ENCODE measurements at regions of chr15 and their contacts with region 1.

Region 1: GRCh38 chr15:57950381-57950946 is 115.0 kb downstream of the ALDH1A2 start:
- DNase-seq: peak; percentile 65
- H3K4me3 Mint-ChIP-seq: peak overlapping the region; percentile 42
- H3K27ac Mint-ChIP-seq: peak overlapping the region; percentile 95
- H3K4me1 Mint-ChIP-seq: peaks cover 31% of the 10 kb centered on the region
- H3K27me3 Mint-ChIP-seq: no peaks in the 10 kb centered on the region
- CTCF ChIP-seq: no peak

Region 2: GRCh38 chr15:57866149-57866736 is 84.2 kb before region 1 on chr15:
- CTCF ChIA-PET with region 1: no interaction called
- intact Hi-C with region 1: loop called (anchors 10 kb)
- DNase-seq: peak; percentile 86
- H3K4me3 Mint-ChIP-seq: no peak overlapping the region
- H3K27ac Mint-ChIP-seq: no peak overlapping the region
- H3K4me1 Mint-ChIP-seq: peaks cover 8% of the 10 kb centered on the region
- H3K27me3 Mint-ChIP-seq: no peaks in the 10 kb centered on the region
- CTCF ChIP-seq: peak; percentile 93

Measured in Calu3 (cell line).